GM10248 (cell line): ENCODE measurements at regions of chr17 and their contacts with region 1.

Region 1: GRCh38 chr17:37818689-37819088 is 73.8 kb upstream of the HNF1B start:
- DNase-seq: no peak
- CTCF ChIP-seq: no peak

Region 2: DNA sequence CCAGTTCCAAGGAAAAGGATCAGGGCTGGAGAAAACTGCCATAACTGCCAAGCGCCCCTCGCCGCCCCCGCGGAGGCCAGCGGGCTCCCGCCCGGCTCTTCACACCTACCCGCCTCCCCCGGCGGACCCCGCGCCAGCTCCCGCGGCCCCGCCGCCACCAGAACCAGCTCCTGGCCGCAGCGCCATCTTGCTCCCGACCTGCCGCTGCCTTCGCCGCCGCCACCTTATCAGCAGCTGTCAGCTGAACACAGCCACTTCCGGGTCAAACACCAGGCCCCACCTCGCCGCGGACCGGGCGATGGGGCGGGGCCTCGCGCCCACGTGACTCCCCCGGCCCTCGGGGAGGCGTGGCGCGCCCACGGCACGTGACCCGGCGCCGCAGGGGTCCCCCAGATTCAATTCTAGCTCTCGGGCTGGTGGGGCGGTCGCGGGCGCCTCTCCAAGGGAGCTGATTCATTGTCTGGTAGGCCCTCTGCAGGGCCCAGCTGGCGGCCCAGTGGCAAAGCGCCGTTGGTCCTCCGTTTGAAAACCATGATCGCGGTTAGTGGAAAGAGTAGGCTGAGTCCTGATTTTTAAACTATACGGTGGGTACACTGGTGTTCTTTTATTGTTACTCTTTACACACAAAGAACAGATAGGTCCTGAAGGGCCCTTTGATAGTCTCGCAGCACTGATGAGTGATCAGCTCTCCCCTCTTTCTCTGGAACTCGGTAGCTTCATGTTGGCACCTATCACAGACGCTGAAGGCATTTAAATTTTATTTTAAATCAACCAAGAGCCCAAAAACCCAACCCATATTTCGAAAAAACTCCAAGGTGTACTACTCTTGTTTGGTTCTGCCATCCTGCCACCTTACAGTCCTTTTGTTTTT is 209.3 kb before region 1 on chr17 and contains the start of gene SYNRG:
- CTCF ChIA-PET with region 1: no interaction called
- POLR2A ChIA-PET with region 1: no interaction called
- DNase-seq: peak; percentile 100
- CTCF ChIP-seq: peak; percentile 31

Region 3: GRCh38 chr17:37650419-37651003 is 168.2 kb before region 1 on chr17:
- CTCF ChIA-PET with region 1: interaction called, 23 read pairs
- POLR2A ChIA-PET with region 1: no interaction called
- DNase-seq: peak; percentile 30
- CTCF ChIP-seq: peak; percentile 48

Region 4: GRCh38 chr17:37701496-37701898 is 117.2 kb before region 1 on chr17:
- CTCF ChIA-PET with region 1: interaction called, 10 read pairs
- POLR2A ChIA-PET with region 1: no interaction called
- DNase-seq: peak; percentile 74
- CTCF ChIP-seq: peak; percentile 74

Region 5: GRCh38 chr17:37802712-37803416 is 15.8 kb before region 1 on chr17:
- CTCF ChIA-PET with region 1: interaction called, 13 read pairs
- POLR2A ChIA-PET with region 1: no interaction called
- DNase-seq: no peak
- CTCF ChIP-seq: no peak